ENCODE measurements at regions of chr11 and their contacts with region 1.

Region 1: GRCh38 chr11:8033305-8034105 is 46.4 kb downstream of the EIF3F start:
- DNase-seq: peak in 1 of 2 experiments; percentile 56
- H3K4me3 ChIP-seq: no peak overlapping the region
- H3K27ac ChIP-seq: no peak overlapping the region
- H3K4me1 ChIP-seq: no peaks in the 10 kb centered on the region
- H3K27me3 ChIP-seq: 0 out of 2 replicates have a peak, but pooled peaks cover 5% of the 10 kb centered on the region
- CTCF ChIP-seq: peak; percentile 79

Region 2: DNA sequence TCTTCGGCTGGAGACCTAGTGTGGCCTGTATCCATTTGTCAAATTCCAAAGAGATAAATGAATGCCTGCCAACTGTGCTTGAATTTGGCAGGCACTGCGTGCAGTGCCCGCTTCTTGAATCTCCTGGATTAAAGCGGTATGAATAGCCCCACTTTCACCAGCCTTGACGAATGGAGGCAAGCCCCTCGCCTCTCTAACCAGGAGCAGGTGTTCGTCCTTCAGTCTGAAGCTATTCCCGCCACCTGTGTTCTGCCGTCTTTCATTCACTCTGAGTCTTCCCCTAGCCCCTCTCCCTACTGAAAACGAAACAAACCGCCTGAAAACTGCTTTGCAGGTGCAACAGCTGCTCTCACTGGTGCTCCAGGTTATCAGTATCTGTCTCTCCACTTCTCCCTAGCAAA is 1002.0 kb before region 1 on chr11:
- CTCF ChIA-PET with region 1: no interaction called
- POLR2A ChIA-PET with region 1: no interaction called
- intact Hi-C with region 1: no loop called
- DNase-seq: no peak
- H3K4me3 ChIP-seq: no peak overlapping the region
- H3K27ac ChIP-seq: no peak overlapping the region
- H3K4me1 ChIP-seq: no peaks in the 10 kb centered on the region
- H3K27me3 ChIP-seq: no peaks in the 10 kb centered on the region
- CTCF ChIP-seq: no peak

Region 3: DNA sequence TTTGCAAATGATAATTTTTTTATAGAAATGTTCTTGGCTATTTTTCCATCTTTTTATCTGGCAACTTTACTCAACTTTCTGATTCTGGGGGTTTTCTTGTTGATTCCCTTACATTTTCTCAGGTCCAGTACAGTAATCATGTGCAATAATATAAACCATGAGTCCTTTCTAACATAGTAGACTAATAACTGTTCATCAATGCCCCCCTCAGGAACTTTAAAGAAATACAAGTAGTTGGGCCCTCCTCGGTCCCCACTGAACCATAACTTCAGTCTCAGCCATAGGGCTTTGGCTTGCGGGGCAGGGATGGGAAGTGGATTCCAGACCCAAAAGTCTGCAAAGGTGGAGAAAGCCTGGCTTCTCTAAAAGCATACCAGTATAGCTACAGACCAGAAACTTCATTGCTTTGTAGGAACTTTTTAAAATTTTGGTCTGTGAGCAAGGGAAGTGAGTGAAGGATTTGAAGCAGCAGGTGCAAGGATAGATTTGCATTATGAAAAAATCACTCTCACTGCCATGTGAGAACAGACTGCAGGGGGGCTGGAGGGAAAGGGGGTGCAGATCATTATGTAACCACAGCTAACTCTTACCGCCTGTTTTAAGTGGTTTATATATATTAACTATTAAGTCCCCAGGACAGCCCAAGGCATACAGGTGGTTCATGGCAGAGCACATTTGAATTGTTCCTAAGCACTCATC is 37.1 kb after region 1 on chr11:
- CTCF ChIA-PET with region 1: interaction called, 10 read pairs
- POLR2A ChIA-PET with region 1: no interaction called
- intact Hi-C with region 1: no loop called
- DNase-seq: no peak
- H3K4me3 ChIP-seq: no peak overlapping the region
- H3K27ac ChIP-seq: no peak overlapping the region
- H3K4me1 ChIP-seq: peaks cover 12% of the 10 kb centered on the region
- H3K27me3 ChIP-seq: no peaks in the 10 kb centered on the region
- CTCF ChIP-seq: peak; percentile 45

Region 4: GRCh38 chr11:8092587-8093424 is 59.3 kb after region 1 on chr11:
- CTCF ChIA-PET with region 1: interaction called, 4 read pairs
- POLR2A ChIA-PET with region 1: no interaction called
- intact Hi-C with region 1: loop called (anchors 2 kb)
- DNase-seq: peak in 1 of 2 experiments; percentile 31
- H3K4me3 ChIP-seq: no peak overlapping the region
- H3K27ac ChIP-seq: no peak overlapping the region
- H3K4me1 ChIP-seq: no peaks in the 10 kb centered on the region
- H3K27me3 ChIP-seq: no peaks in the 10 kb centered on the region
- CTCF ChIP-seq: peak; percentile 58